Endothelial cell of umbilical vein (primary cell): ENCODE measurements at regions of chr17 and their contacts with region 1.

Region 1: DNA sequence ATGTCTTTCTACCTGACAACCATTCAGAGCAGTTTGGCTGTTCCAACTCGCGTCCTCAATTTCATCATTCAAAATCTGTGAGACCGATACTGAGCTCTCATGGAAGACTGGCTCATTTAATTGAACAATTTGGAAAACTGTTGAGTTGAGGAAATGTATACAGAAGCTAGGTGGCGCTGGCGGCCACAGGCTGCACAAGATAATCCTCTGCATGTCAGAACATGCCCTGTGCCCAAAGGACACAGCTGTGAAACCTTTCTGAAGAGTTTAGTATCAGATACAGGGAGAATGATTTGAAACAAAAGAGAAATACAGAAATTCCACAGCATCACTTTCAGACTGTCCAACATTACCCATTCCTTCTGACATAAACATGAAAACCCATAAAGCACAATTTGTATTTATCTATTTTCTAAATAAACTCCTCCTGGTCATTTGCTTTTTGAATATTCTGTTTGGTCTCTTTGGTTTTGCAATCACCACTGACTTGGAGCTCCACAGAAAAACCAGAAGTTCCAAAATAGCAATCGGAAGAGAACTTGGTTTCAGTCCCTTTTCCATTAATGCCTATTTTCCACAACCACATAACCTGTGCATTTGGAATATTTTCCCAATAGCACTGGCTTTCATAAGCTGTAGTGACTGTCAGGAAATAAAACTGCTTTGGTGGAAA is 192.8 kb downstream of the MAP2K6 start:
- DNase-seq: peak; percentile 89
- H3K4me3 ChIP-seq: no peak overlapping the region
- H3K27ac ChIP-seq: peak overlapping the region; percentile 92
- H3K4me1 ChIP-seq: peaks cover 28% of the 10 kb centered on the region
- H3K27me3 ChIP-seq: no peaks in the 10 kb centered on the region
- CTCF ChIP-seq: peak; percentile 71 to 80
- POLR2A ChIP-seq: no peak

Region 2: GRCh38 chr17:68640242-68640989 is 966.9 kb before region 1 on chr17:
- CTCF ChIA-PET with region 1: no interaction called
- POLR2A ChIA-PET with region 1: no interaction called
- dilution Hi-C with region 1: no loop called
- intact Hi-C with region 1: no loop called
- DNase-seq: no peak
- H3K4me3 ChIP-seq: no peak overlapping the region
- H3K27ac ChIP-seq: no peak overlapping the region
- H3K4me1 ChIP-seq: no peaks in the 10 kb centered on the region
- H3K27me3 ChIP-seq: peaks cover 0 to 2% of the 10 kb centered on the region in 2 experiments
- CTCF ChIP-seq: no peak
- POLR2A ChIP-seq: no peak

Region 3: DNA sequence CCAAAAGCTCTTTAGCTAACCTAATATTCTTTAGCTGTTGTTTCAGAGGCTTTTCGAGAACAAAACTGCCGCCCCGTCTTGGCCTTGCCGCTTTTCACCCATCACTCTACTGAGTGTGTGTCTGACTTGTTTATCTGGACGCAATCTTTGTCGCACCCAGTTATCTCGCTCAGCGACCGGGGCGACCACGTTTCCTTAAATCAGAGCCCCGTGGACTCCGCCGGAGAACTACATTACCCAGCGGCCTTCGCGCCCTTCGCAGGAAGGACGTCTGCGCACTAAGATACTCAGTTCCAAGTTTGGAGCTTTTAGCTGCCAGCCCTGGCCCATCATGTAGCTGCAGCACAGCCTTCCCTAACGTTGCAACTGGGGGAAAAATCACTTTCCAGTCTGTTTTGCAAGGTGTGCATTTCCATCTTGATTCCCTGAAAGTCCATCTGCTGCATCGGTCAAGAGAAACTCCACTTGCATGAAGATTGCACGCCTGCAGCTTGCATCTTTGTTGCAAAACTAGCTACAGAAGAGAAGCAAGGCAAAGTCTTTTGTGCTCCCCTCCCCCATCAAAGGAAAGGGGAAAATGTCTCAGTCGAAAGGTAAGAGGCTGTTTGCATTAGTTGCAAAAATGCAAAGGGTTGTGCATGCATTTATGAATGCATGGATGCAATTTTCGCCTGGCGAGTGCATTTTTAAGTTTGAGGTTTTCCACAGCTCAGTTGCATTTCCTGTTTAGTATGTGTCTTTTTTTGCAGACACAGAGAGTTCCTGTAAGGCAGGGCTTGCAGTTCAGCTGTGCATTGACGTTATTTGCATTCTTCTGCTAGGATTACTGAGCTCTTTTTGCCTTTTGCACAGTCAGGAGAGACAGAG is 192.7 kb before region 1 on chr17 and contains the start of gene MAP2K6:
- CTCF ChIA-PET with region 1: no interaction called
- POLR2A ChIA-PET with region 1: no interaction called
- dilution Hi-C with region 1: no loop called
- intact Hi-C with region 1: no loop called
- DNase-seq: peak; percentile 86
- H3K4me3 ChIP-seq: peak within 1 kb of the TSS; percentile 42 to 70 (median 48)
- H3K27ac ChIP-seq: peak within 1 kb of the TSS; percentile 35
- H3K4me1 ChIP-seq: peaks cover 48% of the 10 kb centered on the region
- H3K27me3 ChIP-seq: no peaks in the 10 kb centered on the region
- CTCF ChIP-seq: no peak
- POLR2A ChIP-seq: peak; percentile 50
- total RNA-seq, gene MAP2K6: 11.4 and 13.9 TPM in 2 replicates

Region 4: GRCh38 chr17:69428254-69428980 is 178.9 kb before region 1 on chr17:
- CTCF ChIA-PET with region 1: no interaction called
- POLR2A ChIA-PET with region 1: no interaction called
- dilution Hi-C with region 1: no loop called
- intact Hi-C with region 1: no loop called
- DNase-seq: no peak
- H3K4me3 ChIP-seq: no peak overlapping the region
- H3K27ac ChIP-seq: no peak overlapping the region
- H3K4me1 ChIP-seq: peaks cover 30% of the 10 kb centered on the region
- H3K27me3 ChIP-seq: no peaks in the 10 kb centered on the region
- CTCF ChIP-seq: no peak
- POLR2A ChIP-seq: no peak

Region 5: DNA sequence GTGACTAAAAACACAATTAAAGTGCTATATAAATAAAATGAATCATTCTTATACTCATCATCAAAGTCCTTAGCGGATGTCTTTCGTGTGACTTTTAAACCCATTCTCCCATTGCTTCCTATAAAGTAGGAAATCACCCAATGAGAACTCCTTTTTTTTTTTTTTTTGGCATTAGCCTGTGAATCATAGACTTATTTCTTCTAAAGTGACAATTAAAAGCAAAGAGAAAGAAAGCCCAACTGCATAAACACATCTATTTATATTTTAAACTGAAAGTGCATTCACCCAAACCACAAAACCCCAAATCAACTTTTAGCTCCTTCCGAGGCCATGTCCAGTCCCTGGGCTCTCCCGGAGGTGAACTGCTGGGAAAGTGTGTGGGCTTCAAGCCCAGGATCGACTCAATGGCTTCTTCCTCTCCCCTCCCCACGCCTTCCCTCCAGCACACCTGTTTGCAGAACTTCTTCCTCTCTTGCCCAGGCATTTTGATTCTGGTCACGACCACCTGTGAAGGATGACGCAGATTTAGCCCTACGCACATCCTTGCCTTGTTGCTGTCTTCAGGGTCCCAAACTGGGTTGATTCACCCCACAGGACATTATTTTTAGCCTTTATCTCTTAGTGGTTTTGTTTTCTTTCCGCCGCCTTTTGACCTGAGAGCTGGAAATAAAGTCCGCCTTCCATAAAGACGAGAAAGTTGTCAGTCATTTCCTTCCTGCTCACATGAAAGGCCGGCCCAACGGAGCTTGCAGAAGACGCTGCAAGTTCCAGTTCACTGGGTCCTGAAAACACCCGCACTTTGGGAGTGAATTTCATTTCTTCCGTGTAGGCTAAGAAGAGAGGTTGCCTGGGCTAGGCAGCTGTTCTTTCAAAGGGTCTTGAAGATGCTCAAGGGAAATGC is 26.0 kb before region 1 on chr17:
- CTCF ChIA-PET with region 1: interaction called, 23 read pairs
- POLR2A ChIA-PET with region 1: no interaction called
- dilution Hi-C with region 1: no loop called
- intact Hi-C with region 1: no loop called
- DNase-seq: peak; percentile 83
- H3K4me3 ChIP-seq: peak overlapping the region in 1 of 3 experiments; percentile 46
- H3K27ac ChIP-seq: no peak overlapping the region
- H3K4me1 ChIP-seq: peaks cover 11% of the 10 kb centered on the region
- H3K27me3 ChIP-seq: peaks cover 13 to 15% of the 10 kb centered on the region in 2 experiments
- CTCF ChIP-seq: no peak
- POLR2A ChIP-seq: no peak

Region 6: DNA sequence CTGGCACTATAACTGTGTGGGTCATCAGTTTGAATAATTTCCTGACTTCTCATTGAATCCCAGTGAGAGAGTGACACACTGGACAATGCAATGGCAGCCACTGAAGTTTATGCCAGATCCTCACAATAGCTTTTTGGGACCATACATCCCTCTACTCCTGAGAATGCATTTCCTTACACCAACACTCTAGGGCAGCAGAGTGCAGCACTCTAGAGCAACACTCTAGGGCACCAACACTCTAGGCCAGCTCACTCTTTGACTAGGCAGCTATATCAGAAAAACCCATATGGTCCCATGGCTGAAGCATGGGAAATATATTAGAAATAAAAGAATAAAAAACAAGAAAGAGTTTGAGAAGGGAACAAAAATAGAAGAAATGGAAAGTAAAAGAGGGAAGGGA is 116.4 kb after region 1 on chr17:
- CTCF ChIA-PET with region 1: interaction called, 20 read pairs
- POLR2A ChIA-PET with region 1: interaction called, 3 read pairs
- dilution Hi-C with region 1: no loop called
- intact Hi-C with region 1: no loop called
- DNase-seq: peak; percentile 25
- H3K4me3 ChIP-seq: no peak overlapping the region
- H3K27ac ChIP-seq: no peak overlapping the region
- H3K4me1 ChIP-seq: no peaks in the 10 kb centered on the region
- H3K27me3 ChIP-seq: no peaks in the 10 kb centered on the region
- CTCF ChIP-seq: peak; percentile 11 to 18
- POLR2A ChIP-seq: no peak

Region 7: GRCh38 chr17:69870091-69870530 is 262.8 kb after region 1 on chr17:
- CTCF ChIA-PET with region 1: interaction called, 36 read pairs
- POLR2A ChIA-PET with region 1: interaction called, 4 read pairs
- dilution Hi-C with region 1: no loop called
- intact Hi-C with region 1: loop called (anchors 2 kb)
- DNase-seq: peak; percentile 83
- H3K4me3 ChIP-seq: no peak overlapping the region
- H3K27ac ChIP-seq: peak overlapping the region; percentile 39
- H3K4me1 ChIP-seq: peaks cover 38% of the 10 kb centered on the region
- H3K27me3 ChIP-seq: no peaks in the 10 kb centered on the region
- CTCF ChIP-seq: no peak
- POLR2A ChIP-seq: peak; percentile 26

Region 8: DNA sequence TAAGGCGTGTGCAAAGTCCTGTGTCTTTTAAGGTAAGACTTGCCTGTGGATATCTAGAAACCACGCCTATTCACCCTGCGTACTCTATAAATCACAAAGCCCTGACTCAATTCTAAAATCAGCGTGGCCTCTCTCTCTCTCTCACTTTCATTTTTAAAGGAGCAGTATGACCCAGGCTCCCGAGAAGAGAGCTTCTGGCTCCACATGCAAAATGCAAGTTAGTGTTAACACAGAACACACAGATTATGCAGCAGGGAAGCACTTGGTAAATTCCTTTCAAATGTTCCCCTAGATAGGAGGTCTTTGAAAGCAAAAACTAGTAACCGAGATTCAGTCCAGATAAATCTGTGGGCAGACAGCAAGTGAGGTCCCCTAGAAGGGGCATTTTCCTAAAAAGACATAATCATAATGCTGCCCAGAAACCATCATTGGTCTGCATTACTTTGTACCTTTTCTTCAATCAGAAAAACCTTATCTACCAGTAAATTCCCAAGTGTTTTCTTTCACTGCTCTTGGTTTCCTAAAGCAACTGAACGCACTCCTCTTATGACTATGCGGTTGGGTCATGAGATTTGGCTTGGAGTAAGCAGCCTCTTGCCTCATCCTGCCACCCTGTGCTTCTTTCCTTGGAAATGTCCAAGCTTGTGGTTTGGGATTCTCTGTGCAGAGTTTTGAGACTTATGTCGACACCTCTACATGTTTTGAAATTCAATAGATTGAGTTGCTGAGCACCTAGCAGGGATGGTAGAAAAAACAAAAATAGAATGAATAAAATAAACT is 530.3 kb after region 1 on chr17:
- CTCF ChIA-PET with region 1: interaction called, 22 read pairs
- POLR2A ChIA-PET with region 1: no interaction called
- dilution Hi-C with region 1: no loop called
- intact Hi-C with region 1: no loop called
- DNase-seq: peak; percentile 80
- H3K4me3 ChIP-seq: peak overlapping the region in 2 of 3 experiments; percentile 47 to 70
- H3K27ac ChIP-seq: peak overlapping the region; percentile 43
- H3K4me1 ChIP-seq: peaks cover 14% of the 10 kb centered on the region
- H3K27me3 ChIP-seq: no peaks in the 10 kb centered on the region
- CTCF ChIP-seq: no peak
- POLR2A ChIP-seq: no peak

Region 9: GRCh38 chr17:70473056-70473455 is 865.8 kb after region 1 on chr17:
- CTCF ChIA-PET with region 1: no interaction called
- POLR2A ChIA-PET with region 1: no interaction called
- dilution Hi-C with region 1: no loop called
- intact Hi-C with region 1: no loop called
- DNase-seq: no peak
- H3K4me3 ChIP-seq: no peak overlapping the region
- H3K27ac ChIP-seq: no peak overlapping the region
- H3K4me1 ChIP-seq: no peaks in the 10 kb centered on the region
- H3K27me3 ChIP-seq: no peaks in the 10 kb centered on the region
- CTCF ChIP-seq: no peak
- POLR2A ChIP-seq: no peak

Region 10: DNA sequence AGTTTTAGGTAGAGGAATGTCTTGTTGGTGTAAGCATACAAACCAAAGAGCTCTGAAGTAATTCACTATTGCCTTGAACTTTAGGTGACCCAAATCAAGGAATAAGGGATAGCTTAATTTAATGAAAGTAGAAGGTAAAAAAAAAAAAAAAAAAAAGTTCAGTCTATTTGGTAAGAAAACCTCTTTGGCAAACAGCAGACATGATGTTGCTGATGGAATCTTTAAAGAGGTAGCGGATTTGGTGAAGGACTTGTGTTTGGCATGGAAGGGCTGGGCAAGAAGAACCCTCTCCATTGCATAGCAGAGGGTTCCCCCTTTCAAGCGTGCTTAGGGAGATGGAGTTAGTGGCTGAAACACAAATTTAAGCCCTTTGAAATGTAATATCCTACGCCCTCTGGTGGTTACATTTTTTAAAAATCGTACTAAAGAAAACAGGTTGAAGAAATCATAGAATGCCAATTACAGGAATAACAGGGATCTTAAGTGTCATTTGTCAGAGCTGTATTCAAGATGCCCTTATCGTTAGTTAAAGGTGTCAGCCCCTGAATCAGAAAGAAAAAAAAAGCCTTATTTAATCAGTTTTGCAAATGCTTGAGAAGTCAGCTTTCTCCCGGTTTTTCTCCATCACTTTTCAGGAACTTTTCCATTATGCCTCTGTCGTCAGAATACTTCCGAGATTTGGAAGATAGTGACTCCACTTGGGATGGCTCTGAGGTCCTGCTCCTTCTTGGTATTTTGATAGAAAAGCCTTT is 945.1 kb after region 1 on chr17:
- CTCF ChIA-PET with region 1: interaction called, 49 read pairs
- POLR2A ChIA-PET with region 1: no interaction called
- dilution Hi-C with region 1: no loop called
- intact Hi-C with region 1: loop called (anchors 5 kb)
- DNase-seq: peak; percentile 75
- H3K4me3 ChIP-seq: no peak overlapping the region
- H3K27ac ChIP-seq: no peak overlapping the region
- H3K4me1 ChIP-seq: no peaks in the 10 kb centered on the region
- H3K27me3 ChIP-seq: no peaks in the 10 kb centered on the region
- CTCF ChIP-seq: peak; percentile 12 to 24
- POLR2A ChIP-seq: no peak